SK-N-SH (cell line): ENCODE measurements at regions of chr1 and their contacts with region 1.

Region 1: DNA sequence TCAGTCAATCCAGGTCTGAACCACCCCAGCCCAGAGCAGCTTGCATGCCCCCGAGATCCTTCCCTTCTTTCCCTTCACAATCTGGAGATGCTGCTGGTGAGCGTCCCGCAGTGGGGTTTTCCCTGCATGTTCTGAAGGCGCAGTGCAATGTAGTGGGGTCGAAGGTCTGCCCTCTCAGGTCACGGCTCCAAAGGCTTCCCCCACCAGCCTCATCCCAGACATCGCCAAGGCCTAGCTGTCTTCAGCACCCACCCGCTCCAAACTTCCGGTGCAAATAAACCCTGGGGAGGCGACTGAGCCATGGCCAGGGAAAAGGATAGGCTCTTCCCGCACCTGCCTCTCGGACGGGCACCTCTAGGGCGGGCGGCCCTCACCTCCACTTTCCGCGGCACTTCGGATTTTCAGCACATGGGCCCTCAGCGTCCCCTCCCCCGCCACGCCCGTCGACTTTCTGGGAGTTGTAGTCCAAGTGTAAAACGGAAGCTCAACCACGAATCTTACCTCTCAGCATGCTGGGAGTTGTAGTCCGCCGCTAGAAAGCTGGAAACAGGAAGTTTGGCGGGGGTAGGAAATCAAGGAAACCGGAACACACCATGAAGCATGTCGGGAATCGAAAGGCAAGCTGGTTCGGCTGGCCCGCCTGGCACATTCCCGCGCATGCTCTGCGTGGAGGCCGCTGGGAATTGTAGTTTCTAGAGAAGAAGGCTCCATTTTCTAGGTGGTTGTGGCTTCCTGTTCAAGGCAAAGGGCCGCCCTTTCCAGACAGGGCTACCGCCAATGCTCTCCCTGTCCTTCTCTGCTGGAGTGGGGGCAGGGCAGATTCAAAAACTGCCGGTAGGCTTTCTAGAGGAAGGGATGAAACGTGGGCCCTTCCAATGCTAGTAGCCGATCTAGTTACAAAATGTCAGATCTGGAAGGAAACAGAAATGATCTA is at the start of gene MRPL24:
- DNase-seq: peak; percentile 91
- H3K4me3 ChIP-seq: peak within 1 kb of the TSS; percentile 83 to 94
- H3K27ac ChIP-seq: peak within 1 kb of the TSS; percentile 82 to 92
- H3K4me1 ChIP-seq: peaks cover 9 to 13% of the 10 kb centered on the region in 2 experiments
- H3K27me3 ChIP-seq: no peaks in the 10 kb centered on the region
- CTCF ChIP-seq: no peak
- EP300 ChIP-seq: peak in 1 of 2 experiments; percentile 31; a peak in 2 of 4 replicates
- RAD21 ChIP-seq: no peak; the same call in 1 of the 2 replicates
- polyA plus RNA-seq, gene MRPL24: 149 and 171 TPM in 2 replicates

Region 2: GRCh38 chr1:156767101-156767878 is 26.3 kb after region 1 on chr1 and contains the start of gene PRCC:
- CTCF ChIA-PET with region 1: interaction called, 5 read pairs
- POLR2A ChIA-PET with region 1: interaction called, 27 read pairs
- DNase-seq: peak; percentile 87
- H3K4me3 ChIP-seq: peak within 1 kb of the TSS; percentile 72 to 86
- H3K27ac ChIP-seq: peak within 1 kb of the TSS; percentile 77 to 90
- H3K4me1 ChIP-seq: peaks cover 23 to 26% of the 10 kb centered on the region in 2 experiments; a peak in 3 of 4 replicates
- H3K27me3 ChIP-seq: no peaks in the 10 kb centered on the region
- CTCF ChIP-seq: 0 out of 2 replicates have a peak, but pooled peaks have one; percentile 7
- EP300 ChIP-seq: peak; percentile 10 to 20; a peak in 2 of 4 replicates
- RAD21 ChIP-seq: peak; percentile 29; the same call in 1 of the 2 replicates
- polyA plus RNA-seq, gene PRCC: 39.2 and 51.8 TPM in 2 replicates